ENCODE measurements at regions of chr5 and their contacts with region 1.

Region 1: GRCh38 chr5:132456296-132457001 is 34.1 kb downstream of the IRF1 start:
- DNase-seq: peak; percentile 56 to 91 (median 67)
- ATAC-seq: peak; percentile 73
- H3K4me3 ChIP-seq: peak overlapping the region; percentile 17
- H3K4me3 Mint-ChIP-seq: peak overlapping the region; percentile 57
- H3K27ac ChIP-seq: peak overlapping the region; percentile 88 to 89
- H3K27ac Mint-ChIP-seq: peak overlapping the region; percentile 97
- H3K4me1 ChIP-seq: peaks cover 87% of the 10 kb centered on the region
- H3K4me1 Mint-ChIP-seq: peaks cover 93% of the 10 kb centered on the region
- H3K27me3 ChIP-seq: no peaks in the 10 kb centered on the region
- H3K27me3 Mint-ChIP-seq: no peaks in the 10 kb centered on the region
- CTCF ChIP-seq: no peak

Region 2: GRCh38 chr5:132419502-132420468 is 36.7 kb before region 1 on chr5:
- CTCF ChIA-PET with region 1: interaction called, 4 read pairs
- POLR2A ChIA-PET with region 1: interaction called, 145 read pairs
- intact Hi-C with region 1: loop called (anchors 5 kb)
- DNase-seq: peak; percentile 27 to 84 (median 54)
- ATAC-seq: peak; percentile 76
- H3K4me3 ChIP-seq: peak overlapping the region; percentile 37
- H3K4me3 Mint-ChIP-seq: peak overlapping the region; percentile 85
- H3K27ac ChIP-seq: peak overlapping the region; percentile 81 to 88
- H3K27ac Mint-ChIP-seq: peak overlapping the region; percentile 92
- H3K4me1 ChIP-seq: peaks cover 91% of the 10 kb centered on the region
- H3K4me1 Mint-ChIP-seq: peaks cover 94% of the 10 kb centered on the region
- H3K27me3 ChIP-seq: no peaks in the 10 kb centered on the region
- H3K27me3 Mint-ChIP-seq: no peaks in the 10 kb centered on the region
- CTCF ChIP-seq: peak; percentile 85

Region 3: GRCh38 chr5:132426525-132427138 is 29.8 kb before region 1 on chr5:
- CTCF ChIA-PET with region 1: interaction called, 12 read pairs
- POLR2A ChIA-PET with region 1: interaction called, 145 read pairs
- intact Hi-C with region 1: loop called (anchors 1 to 5 kb)
- DNase-seq: peak; percentile 20 to 88 (median 52)
- ATAC-seq: peak; percentile 32
- H3K4me3 ChIP-seq: peak overlapping the region; percentile 13
- H3K4me3 Mint-ChIP-seq: peak overlapping the region; percentile 77
- H3K27ac ChIP-seq: peak overlapping the region; percentile 78 to 85
- H3K27ac Mint-ChIP-seq: peak overlapping the region; percentile 93
- H3K4me1 ChIP-seq: peaks cover 99% of the 10 kb centered on the region
- H3K4me1 Mint-ChIP-seq: peaks cover 97% of the 10 kb centered on the region
- H3K27me3 ChIP-seq: no peaks in the 10 kb centered on the region
- H3K27me3 Mint-ChIP-seq: no peaks in the 10 kb centered on the region
- CTCF ChIP-seq: no peak

Region 4: GRCh38 chr5:132437604-132438266 is 18.7 kb before region 1 on chr5:
- CTCF ChIA-PET with region 1: interaction called, 7 read pairs
- POLR2A ChIA-PET with region 1: interaction called, 57 read pairs
- intact Hi-C with region 1: loop called in 1 of 2 experiments (anchors 2 kb)
- DNase-seq: peak; percentile 25 to 87 (median 62)
- ATAC-seq: peak; percentile 96
- H3K4me3 ChIP-seq: peak overlapping the region; percentile 21
- H3K4me3 Mint-ChIP-seq: peak overlapping the region; percentile 42
- H3K27ac ChIP-seq: peak overlapping the region; percentile 67 to 72
- H3K27ac Mint-ChIP-seq: peak overlapping the region; percentile 90
- H3K4me1 ChIP-seq: peaks cover 87% of the 10 kb centered on the region
- H3K4me1 Mint-ChIP-seq: peaks cover 89% of the 10 kb centered on the region
- H3K27me3 ChIP-seq: no peaks in the 10 kb centered on the region
- H3K27me3 Mint-ChIP-seq: no peaks in the 10 kb centered on the region
- CTCF ChIP-seq: no peak

Region 5: GRCh38 chr5:132466433-132467286 is 10.2 kb after region 1 on chr5:
- CTCF ChIA-PET with region 1: interaction called, 11 read pairs
- POLR2A ChIA-PET with region 1: interaction called, 1,045 read pairs
- intact Hi-C with region 1: loop called in 1 of 2 experiments (anchors 1 kb)
- DNase-seq: peak in 13 of 14 experiments; percentile 56 to 90 (median 66)
- ATAC-seq: peak; percentile 63
- H3K4me3 ChIP-seq: peak overlapping the region; percentile 34
- H3K4me3 Mint-ChIP-seq: peak overlapping the region; percentile 85
- H3K27ac ChIP-seq: peak overlapping the region; percentile 69 to 73
- H3K27ac Mint-ChIP-seq: peak overlapping the region; percentile 97
- H3K4me1 ChIP-seq: peaks cover 88% of the 10 kb centered on the region
- H3K4me1 Mint-ChIP-seq: peaks cover 99% of the 10 kb centered on the region
- H3K27me3 ChIP-seq: no peaks in the 10 kb centered on the region
- H3K27me3 Mint-ChIP-seq: no peaks in the 10 kb centered on the region
- CTCF ChIP-seq: no peak

Region 6: GRCh38 chr5:132473019-132473531 is 16.6 kb after region 1 on chr5:
- CTCF ChIA-PET with region 1: interaction called, 20 read pairs
- POLR2A ChIA-PET with region 1: interaction called, 1,045 read pairs
- intact Hi-C with region 1: loop called in 1 of 2 experiments (anchors 2 kb)
- DNase-seq: peak; percentile 73 to 96 (median 81)
- ATAC-seq: peak; percentile 68
- H3K4me3 ChIP-seq: no peak overlapping the region
- H3K4me3 Mint-ChIP-seq: peak overlapping the region; percentile 74
- H3K27ac ChIP-seq: peak overlapping the region; percentile 70 to 77
- H3K27ac Mint-ChIP-seq: peak overlapping the region; percentile 97
- H3K4me1 ChIP-seq: peaks cover 92% of the 10 kb centered on the region
- H3K4me1 Mint-ChIP-seq: peaks cover 96% of the 10 kb centered on the region
- H3K27me3 ChIP-seq: no peaks in the 10 kb centered on the region
- H3K27me3 Mint-ChIP-seq: peaks cover 10% of the 10 kb centered on the region
- CTCF ChIP-seq: no peak

Region 7: GRCh38 chr5:132500931-132501630 is 44.6 kb after region 1 on chr5:
- CTCF ChIA-PET with region 1: interaction called, 11 read pairs
- POLR2A ChIA-PET with region 1: interaction called, 79 read pairs
- intact Hi-C with region 1: loop called in 1 of 2 experiments (anchors 5 kb)
- DNase-seq: peak; percentile 63 to 90 (median 73)
- ATAC-seq: peak; percentile 26
- H3K4me3 ChIP-seq: no peak overlapping the region
- H3K4me3 Mint-ChIP-seq: no peak overlapping the region
- H3K27ac ChIP-seq: peak overlapping the region in 1 of 2 donors; percentile 37
- H3K27ac Mint-ChIP-seq: peak overlapping the region; percentile 65
- H3K4me1 ChIP-seq: peaks cover 49% of the 10 kb centered on the region
- H3K4me1 Mint-ChIP-seq: peaks cover 29% of the 10 kb centered on the region
- H3K27me3 ChIP-seq: no peaks in the 10 kb centered on the region
- H3K27me3 Mint-ChIP-seq: peaks cover 3% of the 10 kb centered on the region
- CTCF ChIP-seq: peak; percentile 88

Region 8: DNA sequence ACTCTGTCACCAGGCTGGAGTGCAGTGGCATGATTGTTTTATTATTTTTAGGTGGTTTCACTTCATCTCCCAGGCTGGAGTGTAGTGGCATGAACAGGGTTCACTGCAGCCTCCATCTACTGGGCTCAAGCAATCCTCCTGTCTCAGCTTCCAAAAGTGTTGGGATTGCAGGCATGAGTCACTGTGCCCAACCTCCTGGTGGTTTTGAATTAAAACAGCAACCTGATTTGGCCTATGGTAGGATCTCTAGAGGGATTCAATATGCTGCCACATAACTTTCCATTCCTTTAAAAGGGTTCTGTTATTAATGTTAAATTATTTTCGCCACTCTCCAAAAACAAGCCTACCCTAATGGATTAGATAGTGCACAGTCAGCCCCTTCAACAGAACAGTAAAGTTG is 585.5 kb after region 1 on chr5:
- CTCF ChIA-PET with region 1: no interaction called
- POLR2A ChIA-PET with region 1: no interaction called
- intact Hi-C with region 1: no loop called
- DNase-seq: no peak
- ATAC-seq: no peak
- H3K4me3 ChIP-seq: no peak overlapping the region
- H3K4me3 Mint-ChIP-seq: no peak overlapping the region
- H3K27ac ChIP-seq: no peak overlapping the region
- H3K27ac Mint-ChIP-seq: no peak overlapping the region
- H3K4me1 ChIP-seq: no peaks in the 10 kb centered on the region
- H3K4me1 Mint-ChIP-seq: no peaks in the 10 kb centered on the region
- H3K27me3 ChIP-seq: no peaks in the 10 kb centered on the region
- H3K27me3 Mint-ChIP-seq: no peaks in the 10 kb centered on the region
- CTCF ChIP-seq: no peak

Measured in CD4-positive, alpha-beta T cell (primary cell).